ENCODE measurements at regions of chr3 and their contacts with region 1.

Region 1: DNA sequence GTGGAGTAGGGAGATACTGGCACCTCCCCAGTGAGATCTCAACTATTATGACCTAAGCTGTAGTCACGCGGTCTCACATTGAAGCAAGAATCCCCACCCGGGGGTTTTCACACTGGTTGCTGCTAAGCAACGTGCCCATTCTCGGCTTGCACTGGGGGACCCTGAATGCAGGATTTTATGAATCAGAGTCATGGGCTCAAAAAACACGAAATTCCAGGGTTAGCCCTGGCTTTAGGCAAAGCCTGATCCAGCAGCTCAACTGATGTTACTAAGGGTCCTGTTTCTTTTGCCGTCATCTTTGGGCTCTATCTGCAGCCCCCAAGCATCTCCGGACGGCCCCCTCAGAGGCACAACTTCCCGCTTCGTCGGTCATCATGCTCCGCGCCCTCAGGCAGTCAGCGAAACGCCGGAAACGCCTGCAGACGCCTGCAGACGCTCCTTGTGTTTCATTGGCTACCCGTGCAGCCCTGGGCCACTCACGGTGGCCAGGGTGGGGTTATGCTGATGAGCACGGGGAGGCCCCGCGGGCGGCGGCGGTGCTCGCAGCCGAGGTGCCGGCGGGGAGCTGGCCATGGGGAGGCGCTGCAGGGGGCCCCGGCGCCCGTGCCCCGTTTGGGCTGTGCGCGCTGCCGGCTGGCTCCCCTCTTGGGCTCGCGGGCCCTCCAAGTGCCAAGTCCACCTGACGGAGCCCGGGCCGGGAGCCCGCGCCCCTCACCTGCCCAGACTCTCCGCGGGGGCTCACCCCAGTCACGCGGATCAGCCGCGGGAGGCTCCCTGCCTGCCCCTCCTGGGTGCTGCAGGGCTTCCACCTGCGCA is 25.8 kb downstream of the EFCC1 start:
- DNase-seq: peak; percentile 85 to 98 (median 91)
- ATAC-seq: peak; percentile 98
- H3K4me3 ChIP-seq: peak overlapping the region; percentile 58 to 61
- H3K4me3 Mint-ChIP-seq: peak overlapping the region; percentile 85
- H3K27ac ChIP-seq: peak overlapping the region; percentile 75 to 80
- H3K27ac Mint-ChIP-seq: peak overlapping the region; percentile 99
- H3K4me1 ChIP-seq: peaks cover 22% of the 10 kb centered on the region
- H3K4me1 Mint-ChIP-seq: peaks cover 26% of the 10 kb centered on the region
- H3K27me3 ChIP-seq: no peaks in the 10 kb centered on the region
- H3K27me3 Mint-ChIP-seq: no peaks in the 10 kb centered on the region
- CTCF ChIP-seq: peak; percentile 84

Region 2: DNA sequence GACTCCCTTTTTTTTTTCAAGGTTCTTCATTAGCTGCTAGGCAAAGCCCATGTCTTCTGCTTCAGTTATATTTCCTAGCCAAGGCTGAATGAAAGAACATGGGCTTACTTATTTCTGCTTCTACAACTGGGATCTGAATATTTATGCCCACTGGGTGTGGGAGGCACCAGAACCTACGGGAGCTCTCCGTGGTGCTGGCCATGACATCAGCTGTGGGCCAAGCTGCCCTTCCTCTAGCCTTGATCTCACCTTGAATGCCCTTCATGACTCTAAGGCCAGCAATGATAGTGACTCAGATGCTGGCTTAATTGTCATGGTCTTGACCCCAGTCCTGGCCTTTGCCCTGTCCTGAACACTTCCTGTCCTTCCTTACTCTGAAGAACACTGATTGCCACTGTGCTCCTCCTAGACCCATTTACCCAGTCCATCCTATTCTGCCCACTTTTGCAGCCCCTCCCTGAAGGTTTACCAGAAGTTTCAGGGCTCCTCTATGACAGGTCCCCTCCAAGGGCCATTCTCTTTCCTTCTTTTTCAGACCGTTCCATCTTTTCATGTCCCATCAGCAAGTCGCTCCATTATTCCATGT is 1706.3 kb before region 1 on chr3:
- CTCF ChIA-PET with region 1: no interaction called
- POLR2A ChIA-PET with region 1: no interaction called
- intact Hi-C with region 1: no loop called
- DNase-seq: no peak
- ATAC-seq: no peak
- H3K4me3 ChIP-seq: no peak overlapping the region
- H3K4me3 Mint-ChIP-seq: no peak overlapping the region
- H3K27ac ChIP-seq: no peak overlapping the region
- H3K27ac Mint-ChIP-seq: no peak overlapping the region
- H3K4me1 ChIP-seq: no peaks in the 10 kb centered on the region
- H3K4me1 Mint-ChIP-seq: peaks cover 3% of the 10 kb centered on the region
- H3K27me3 ChIP-seq: peaks cover 3% of the 10 kb centered on the region in 2 experiments
- H3K27me3 Mint-ChIP-seq: peaks cover 8% of the 10 kb centered on the region
- CTCF ChIP-seq: no peak

Region 3: DNA sequence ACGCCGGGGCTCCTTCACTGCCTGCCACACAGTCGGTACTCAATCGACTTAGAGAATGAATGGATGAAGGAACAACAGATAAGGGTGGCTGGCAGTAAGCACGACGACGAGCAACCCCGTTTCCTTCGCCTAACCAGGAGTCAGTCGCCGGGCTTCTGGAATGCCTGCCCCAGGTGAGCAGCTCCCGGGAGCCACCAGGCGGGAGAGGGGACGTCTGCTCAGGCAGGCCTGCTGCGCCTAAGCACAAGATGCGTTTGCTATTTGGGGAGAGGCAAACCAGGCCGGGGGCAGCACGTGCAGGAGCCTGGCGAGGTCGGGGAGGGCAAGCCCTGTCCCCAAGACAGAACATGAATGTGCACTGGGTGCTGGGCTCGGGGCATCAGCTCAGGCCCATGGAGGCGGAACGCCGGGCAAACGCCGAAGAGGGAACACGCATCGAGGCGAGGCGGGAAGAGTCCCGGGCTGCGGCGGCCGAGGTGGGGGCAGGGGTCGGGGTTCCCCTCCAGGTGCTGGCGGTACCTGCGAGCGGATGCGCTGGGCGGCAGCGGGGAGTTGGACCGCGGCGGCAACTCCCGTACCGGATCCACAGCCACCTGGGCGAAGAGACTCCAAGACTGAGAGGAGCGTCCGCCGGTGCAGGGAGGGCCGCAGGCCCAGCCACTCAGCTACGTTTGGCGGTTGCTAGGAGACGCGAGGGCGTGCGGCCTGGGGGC is 33.3 kb before region 1 on chr3 and contains the start of gene CFAP92:
- CTCF ChIA-PET with region 1: interaction called, 8 read pairs
- POLR2A ChIA-PET with region 1: interaction called, 5 read pairs
- intact Hi-C with region 1: loop called in 1 of 2 experiments (anchors 1 kb)
- DNase-seq: peak; percentile 84 to 94 (median 92)
- ATAC-seq: peak; percentile 97
- H3K4me3 ChIP-seq: peak within 1 kb of the TSS; percentile 39
- H3K4me3 Mint-ChIP-seq: peak within 1 kb of the TSS; percentile 81
- H3K27ac ChIP-seq: peak within 1 kb of the TSS in 1 of 2 experiments; percentile 22
- H3K27ac Mint-ChIP-seq: peak within 1 kb of the TSS; percentile 39
- H3K4me1 ChIP-seq: peaks cover 31% of the 10 kb centered on the region
- H3K4me1 Mint-ChIP-seq: peaks cover 30% of the 10 kb centered on the region
- H3K27me3 ChIP-seq: no peaks in the 10 kb centered on the region
- H3K27me3 Mint-ChIP-seq: no peaks in the 10 kb centered on the region
- CTCF ChIP-seq: no peak
- total RNA-seq, gene CFAP92: 0.60 to 0.75 TPM

Region 4: GRCh38 chr3:129003578-129004160 is 23.3 kb before region 1 on chr3:
- CTCF ChIA-PET with region 1: interaction called, 8 read pairs
- POLR2A ChIA-PET with region 1: interaction called, 8 read pairs
- intact Hi-C with region 1: loop called in 1 of 2 experiments (anchors 1 kb)
- DNase-seq: peak in 8 of 9 experiments; percentile 38 to 82 (median 60)
- ATAC-seq: peak; percentile 92
- H3K4me3 ChIP-seq: peak overlapping the region in 1 of 2 experiments; percentile 12
- H3K4me3 Mint-ChIP-seq: peak overlapping the region; percentile 70
- H3K27ac ChIP-seq: no peak overlapping the region
- H3K27ac Mint-ChIP-seq: no peak overlapping the region
- H3K4me1 ChIP-seq: peaks cover 43% of the 10 kb centered on the region
- H3K4me1 Mint-ChIP-seq: peaks cover 43% of the 10 kb centered on the region
- H3K27me3 ChIP-seq: peaks cover 5 to 23% of the 10 kb centered on the region in 2 experiments
- H3K27me3 Mint-ChIP-seq: peaks cover 21% of the 10 kb centered on the region
- CTCF ChIP-seq: peak; percentile 34

Region 5: DNA sequence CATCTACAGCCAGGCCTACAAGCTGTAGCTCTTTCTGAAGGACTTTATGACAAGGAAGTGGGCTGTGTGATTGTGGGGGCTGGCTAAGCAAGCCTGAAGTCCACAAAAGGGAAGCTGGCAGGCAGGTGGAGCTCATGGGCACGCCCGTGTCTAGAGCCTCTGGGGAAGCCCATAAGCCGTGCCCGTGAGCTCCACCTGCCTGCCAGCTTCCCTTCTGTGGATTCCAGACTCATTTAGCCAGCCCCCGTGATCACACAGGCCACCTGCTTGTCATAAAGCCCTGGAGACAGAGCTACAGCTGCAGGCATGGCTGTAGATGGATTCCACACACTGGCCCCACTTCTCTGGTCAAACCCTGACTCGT is 10.6 kb before region 1 on chr3:
- CTCF ChIA-PET with region 1: interaction called, 67 read pairs
- POLR2A ChIA-PET with region 1: interaction called, 67 read pairs
- intact Hi-C with region 1: loop called in 1 of 2 experiments (anchors 1 kb)
- DNase-seq: peak in 8 of 9 experiments; percentile 48 to 91 (median 74)
- ATAC-seq: peak; percentile 86
- H3K4me3 ChIP-seq: peak overlapping the region; percentile 40 to 41
- H3K4me3 Mint-ChIP-seq: peak overlapping the region; percentile 73
- H3K27ac ChIP-seq: peak overlapping the region; percentile 49 to 87
- H3K27ac Mint-ChIP-seq: peak overlapping the region; percentile 92
- H3K4me1 ChIP-seq: peaks cover 41% of the 10 kb centered on the region
- H3K4me1 Mint-ChIP-seq: peaks cover 44% of the 10 kb centered on the region
- H3K27me3 ChIP-seq: no peaks in the 10 kb centered on the region
- H3K27me3 Mint-ChIP-seq: no peaks in the 10 kb centered on the region
- CTCF ChIP-seq: peak; percentile 38

Region 6: GRCh38 chr3:129160891-129161859 is 134.2 kb after region 1 on chr3 and contains the start of gene ISY1:
- CTCF ChIA-PET with region 1: interaction called, 3 read pairs
- POLR2A ChIA-PET with region 1: interaction called, 3 read pairs
- intact Hi-C with region 1: loop called in 1 of 2 experiments (anchors 1 kb)
- DNase-seq: peak; percentile 71 to 97 (median 86)
- ATAC-seq: peak; percentile 80
- H3K4me3 ChIP-seq: peak within 1 kb of the TSS; percentile 84 to 94
- H3K4me3 Mint-ChIP-seq: peak within 1 kb of the TSS; percentile 95
- H3K27ac ChIP-seq: peak within 1 kb of the TSS; percentile 92 to 99
- H3K27ac Mint-ChIP-seq: peak within 1 kb of the TSS; percentile 96
- H3K4me1 ChIP-seq: peaks cover 18% of the 10 kb centered on the region
- H3K4me1 Mint-ChIP-seq: peaks cover 43% of the 10 kb centered on the region
- H3K27me3 ChIP-seq: no peaks in the 10 kb centered on the region
- H3K27me3 Mint-ChIP-seq: no peaks in the 10 kb centered on the region
- CTCF ChIP-seq: peak; percentile 70
- total RNA-seq, gene ISY1: 35.2 to 38.7 TPM

Region 7: DNA sequence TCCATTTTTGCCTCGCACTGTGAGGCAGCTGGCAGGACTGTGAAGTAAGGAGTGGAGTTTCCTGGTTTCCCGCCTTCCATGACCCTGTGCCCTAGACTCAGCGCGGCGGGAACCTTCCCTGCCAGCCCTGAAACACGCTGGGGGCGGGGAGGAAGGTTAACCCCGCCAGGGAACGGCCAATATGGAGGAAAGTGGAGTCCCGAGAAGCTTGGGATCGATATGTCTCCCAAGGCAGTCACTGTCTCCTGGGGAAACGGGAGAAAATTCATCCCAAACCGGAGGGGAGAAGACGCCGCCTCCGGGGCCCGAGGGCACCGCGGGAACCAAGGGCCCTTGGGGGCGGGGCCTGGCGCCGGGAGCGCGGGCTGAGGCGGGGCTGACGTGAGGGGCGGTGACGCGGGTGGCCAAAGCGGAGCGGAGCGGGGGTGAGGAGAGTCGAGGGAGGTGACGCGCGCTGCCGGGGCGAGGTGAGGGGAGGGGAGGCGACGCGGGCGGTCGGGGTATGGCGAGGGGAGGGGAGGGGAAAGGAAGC is 251.6 kb after region 1 on chr3 and contains the start of gene HMCES:
- CTCF ChIA-PET with region 1: no interaction called
- POLR2A ChIA-PET with region 1: no interaction called
- intact Hi-C with region 1: loop called in 1 of 2 experiments (anchors 1 kb)
- DNase-seq: peak; percentile 88 to 98 (median 96)
- ATAC-seq: peak; percentile 94
- H3K4me3 ChIP-seq: peak within 1 kb of the TSS; percentile 59 to 92
- H3K4me3 Mint-ChIP-seq: peak within 1 kb of the TSS; percentile 95
- H3K27ac ChIP-seq: peak within 1 kb of the TSS; percentile 88 to 93
- H3K27ac Mint-ChIP-seq: peak within 1 kb of the TSS; percentile 97
- H3K4me1 ChIP-seq: peaks cover 39% of the 10 kb centered on the region
- H3K4me1 Mint-ChIP-seq: peaks cover 42% of the 10 kb centered on the region
- H3K27me3 ChIP-seq: no peaks in the 10 kb centered on the region
- H3K27me3 Mint-ChIP-seq: no peaks in the 10 kb centered on the region
- CTCF ChIP-seq: no peak
- total RNA-seq, gene HMCES: 69.5 to 78.7 TPM